ENCODE measurements at regions of chr11 and their contacts with region 1.

Region 1: DNA sequence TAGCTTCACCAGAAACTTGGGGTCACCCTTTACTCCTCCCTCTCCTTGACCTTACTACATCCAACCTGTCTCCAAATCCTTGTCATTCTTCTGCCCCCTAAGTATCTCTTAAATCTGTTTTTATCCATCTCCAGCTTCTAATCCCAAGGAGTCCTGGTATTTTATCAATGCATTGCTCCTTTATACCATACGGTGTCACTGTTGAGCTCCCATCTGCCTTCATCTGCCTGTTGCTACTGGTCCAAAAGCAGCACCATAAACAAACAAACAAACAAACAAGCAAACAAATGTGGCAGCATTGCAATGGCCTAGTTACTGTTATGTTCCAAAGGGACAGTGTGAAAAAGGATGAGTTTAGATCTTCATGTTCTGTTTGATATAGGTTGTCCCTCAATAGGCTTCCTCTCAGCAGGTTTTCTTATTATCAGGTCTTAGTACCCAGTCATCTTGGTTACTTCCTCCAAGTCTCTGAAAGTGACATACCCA is 34.2 kb downstream of the DNHD1 start:
- DNase-seq: no peak
- ATAC-seq: peak; percentile 70

Region 2: GRCh38 chr11:6298605-6299004 is 232.7 kb before region 1 on chr11:
- intact Hi-C with region 1: no loop called
- DNase-seq: peak in 1 of 2 donors; percentile 45
- ATAC-seq: peak; percentile 87

Region 3: GRCh38 chr11:6705905-6706535 is 174.7 kb after region 1 on chr11:
- intact Hi-C with region 1: loop called in 1 of 2 experiments (anchors 10 kb)
- DNase-seq: peak in 1 of 2 donors; percentile 44
- ATAC-seq: peak; percentile 49